H1 (cell line): ENCODE measurements at regions of chr16 and their contacts with region 1.

Region 1: DNA sequence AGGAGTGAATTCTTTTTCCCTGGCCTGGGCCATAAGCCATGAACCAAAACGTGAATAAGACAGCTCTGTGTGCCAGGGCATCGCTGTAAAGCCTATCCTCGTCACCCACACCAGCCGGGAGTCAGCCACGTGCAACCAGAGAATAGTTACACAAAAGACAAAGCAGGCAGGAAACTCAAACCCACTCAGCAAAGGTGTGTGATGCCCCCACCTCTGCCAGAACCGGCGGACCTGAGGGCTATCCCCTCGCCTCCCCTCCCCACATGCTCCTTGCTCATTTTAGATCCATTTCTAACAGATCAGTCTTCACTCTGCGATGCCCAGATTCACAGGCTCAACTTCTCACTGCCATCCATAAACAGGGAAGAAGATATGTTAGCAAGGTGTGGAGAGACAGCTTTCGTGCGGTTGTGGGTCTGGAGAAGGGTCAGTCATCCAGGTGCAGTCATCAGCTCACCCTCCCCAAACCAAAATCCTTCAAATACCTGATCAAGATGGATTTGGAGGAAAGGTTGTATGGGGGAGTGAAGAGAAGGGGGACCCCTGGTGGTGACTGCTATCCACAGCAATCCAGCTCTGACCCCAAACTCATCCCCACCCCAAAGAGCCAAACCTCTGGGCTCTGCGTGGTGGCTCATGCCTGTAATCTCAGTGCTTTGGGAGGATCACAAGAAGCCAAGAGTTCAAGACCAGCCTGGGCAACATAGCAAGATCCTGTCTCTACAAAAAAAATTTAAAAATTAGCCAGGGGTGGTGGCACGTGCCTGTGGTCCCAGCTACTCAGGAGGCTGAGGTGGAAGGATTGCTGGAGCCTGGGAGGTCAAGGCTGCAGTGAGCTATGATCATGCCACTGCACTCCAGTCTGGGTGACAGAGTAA is 219.2 kb downstream of the C16orf78 start:
- DNase-seq: peak; percentile 49 to 80
- H3K4me3 ChIP-seq: no peak overlapping the region
- H3K27ac ChIP-seq: no peak overlapping the region
- H3K4me1 ChIP-seq: peaks cover 13 to 40% (median 19%) of the 10 kb centered on the region in 4 experiments
- H3K27me3 ChIP-seq: no peaks in the 10 kb centered on the region
- CTCF ChIP-seq: peak; percentile 79 to 88 (median 81)
- EP300 ChIP-seq: no peak
- POLR2A ChIP-seq: no peak
- RAD21 ChIP-seq: peak; percentile 76 to 82

Region 2: GRCh38 chr16:49441366-49441780 is 151.4 kb before region 1 on chr16:
- CTCF ChIA-PET with region 1: interaction called, 11 read pairs
- POLR2A ChIA-PET with region 1: no interaction called
- DNase-seq: peak in 1 of 2 experiments; percentile 68
- H3K4me3 ChIP-seq: no peak overlapping the region
- H3K27ac ChIP-seq: no peak overlapping the region
- H3K4me1 ChIP-seq: peaks cover 8 to 23% (median 18%) of the 10 kb centered on the region in 4 experiments
- H3K27me3 ChIP-seq: no peaks in the 10 kb centered on the region; a peak in 1 of 7 replicates
- CTCF ChIP-seq: peak in 2 of 3 experiments; percentile 53 to 63; a peak in 2 of 4 replicates
- EP300 ChIP-seq: no peak
- POLR2A ChIP-seq: no peak
- RAD21 ChIP-seq: peak; percentile 56 to 59

Region 3: DNA sequence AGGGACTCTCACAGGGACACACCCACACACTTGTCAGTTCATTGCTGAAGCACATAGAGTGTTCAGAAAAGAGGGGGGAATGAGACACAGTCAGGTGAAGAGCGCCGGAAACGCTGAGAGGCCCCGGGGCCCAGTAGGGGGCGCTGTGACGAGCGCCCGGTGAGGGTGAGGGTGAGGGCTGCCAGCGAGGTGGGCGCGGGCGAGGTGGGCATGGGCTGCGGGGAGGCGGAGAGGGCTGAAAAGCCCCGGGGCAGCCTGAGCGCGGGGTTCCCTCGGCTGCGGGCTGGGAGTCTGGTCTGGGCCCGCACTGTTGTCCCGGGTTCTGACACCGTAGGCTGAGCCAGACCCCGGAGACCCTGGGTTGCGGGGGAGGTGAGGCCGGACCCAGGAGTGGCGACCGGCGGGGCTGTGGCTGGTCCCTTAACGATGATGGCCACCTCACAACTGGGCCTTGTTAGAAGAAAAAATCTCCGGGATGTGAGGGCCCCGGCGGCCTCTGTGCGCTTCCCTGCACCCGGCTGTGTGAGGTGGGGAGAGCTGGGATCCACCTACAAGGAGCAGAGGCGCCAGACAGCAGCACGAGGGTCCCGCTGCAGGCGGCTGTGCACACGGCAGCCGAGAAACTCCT is 127.8 kb before region 1 on chr16:
- CTCF ChIA-PET with region 1: interaction called, 12 read pairs
- POLR2A ChIA-PET with region 1: no interaction called
- DNase-seq: peak in 1 of 2 experiments; percentile 88
- H3K4me3 ChIP-seq: peak overlapping the region; percentile 38 to 65 (median 53)
- H3K27ac ChIP-seq: no peak overlapping the region
- H3K4me1 ChIP-seq: peaks cover 0 to 3% (median 1%) of the 10 kb centered on the region in 4 experiments; a peak in 4 of 7 replicates
- H3K27me3 ChIP-seq: peaks cover 0 to 15% (median 12%) of the 10 kb centered on the region in 4 experiments; a peak in 6 of 7 replicates
- CTCF ChIP-seq: peak; percentile 78 to 81 (median 79)
- EP300 ChIP-seq: no peak
- POLR2A ChIP-seq: peak in 1 of 2 experiments; percentile 49; a peak in 1 of 3 replicates
- RAD21 ChIP-seq: peak; percentile 29 to 62; a peak in 2 of 4 replicates

Region 4: GRCh38 chr16:49513040-49513439 is 79.7 kb before region 1 on chr16:
- CTCF ChIA-PET with region 1: interaction called, 11 read pairs
- POLR2A ChIA-PET with region 1: no interaction called
- DNase-seq: no peak
- H3K4me3 ChIP-seq: no peak overlapping the region
- H3K27ac ChIP-seq: no peak overlapping the region
- H3K4me1 ChIP-seq: no peaks in the 10 kb centered on the region
- H3K27me3 ChIP-seq: no peaks in the 10 kb centered on the region
- CTCF ChIP-seq: peak; percentile 53 to 61 (median 61)
- EP300 ChIP-seq: no peak
- POLR2A ChIP-seq: no peak
- RAD21 ChIP-seq: peak; percentile 65 to 77

Region 5: GRCh38 chr16:49542391-49542891 is 50.3 kb before region 1 on chr16:
- CTCF ChIA-PET with region 1: interaction called, 26 read pairs
- POLR2A ChIA-PET with region 1: interaction called, 3 read pairs
- DNase-seq: no peak
- H3K4me3 ChIP-seq: no peak overlapping the region
- H3K27ac ChIP-seq: no peak overlapping the region
- H3K4me1 ChIP-seq: peaks cover 0 to 18% (median 10%) of the 10 kb centered on the region in 4 experiments; a peak in 5 of 7 replicates
- H3K27me3 ChIP-seq: no peaks in the 10 kb centered on the region
- CTCF ChIP-seq: no peak
- EP300 ChIP-seq: no peak
- POLR2A ChIP-seq: no peak
- RAD21 ChIP-seq: no peak

Region 6: GRCh38 chr16:49564496-49565229 is 28.1 kb before region 1 on chr16:
- CTCF ChIA-PET with region 1: interaction called, 165 read pairs
- POLR2A ChIA-PET with region 1: no interaction called
- DNase-seq: no peak
- H3K4me3 ChIP-seq: no peak overlapping the region
- H3K27ac ChIP-seq: no peak overlapping the region
- H3K4me1 ChIP-seq: peaks cover 3 to 10% (median 4%) of the 10 kb centered on the region in 4 experiments
- H3K27me3 ChIP-seq: no peaks in the 10 kb centered on the region; a peak in 1 of 7 replicates
- CTCF ChIP-seq: no peak
- EP300 ChIP-seq: no peak
- POLR2A ChIP-seq: no peak
- RAD21 ChIP-seq: no peak

Region 7: DNA sequence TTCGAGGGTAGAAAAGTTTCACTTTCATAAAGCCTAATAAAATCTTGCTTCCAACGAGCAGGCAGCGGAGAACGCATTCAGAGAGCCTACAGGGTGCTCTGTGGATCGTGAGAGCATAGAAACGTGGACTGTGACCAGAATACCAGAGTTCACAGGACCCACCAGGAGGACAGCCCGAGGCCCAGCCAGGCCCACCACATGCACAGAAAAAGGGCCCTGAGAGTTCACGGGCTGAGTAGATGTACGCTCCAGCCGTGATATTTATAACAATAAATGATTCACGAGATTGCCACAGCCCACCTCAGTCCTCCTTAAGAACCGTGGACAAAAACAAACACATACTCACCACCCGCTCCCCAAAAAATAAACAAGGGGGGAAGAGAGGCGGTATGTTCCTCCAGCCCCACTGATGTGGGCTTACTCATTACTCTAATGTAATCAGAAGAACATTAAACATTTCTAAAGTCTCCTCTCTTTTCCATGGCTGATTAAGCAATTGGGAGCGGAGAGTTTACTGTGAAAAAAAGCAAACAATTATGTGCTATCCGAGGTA is 12.0 kb before region 1 on chr16:
- CTCF ChIA-PET with region 1: interaction called, 30 read pairs
- POLR2A ChIA-PET with region 1: interaction called, 4 read pairs
- DNase-seq: no peak
- H3K4me3 ChIP-seq: no peak overlapping the region
- H3K27ac ChIP-seq: no peak overlapping the region
- H3K4me1 ChIP-seq: peaks cover 2 to 13% (median 7%) of the 10 kb centered on the region in 4 experiments; a peak in 5 of 7 replicates
- H3K27me3 ChIP-seq: no peaks in the 10 kb centered on the region
- CTCF ChIP-seq: no peak
- EP300 ChIP-seq: no peak
- POLR2A ChIP-seq: no peak
- RAD21 ChIP-seq: no peak